ENCODE measurements at regions of chr5 and their contacts with region 1.

Region 1: GRCh38 chr5:72280581-72281170 is 39.4 kb downstream of the MRPS27 start:
- DNase-seq: peak in 1 of 3 donors; percentile 16
- ATAC-seq: no peak
- H3K4me3 ChIP-seq: no peak overlapping the region
- H3K4me1 ChIP-seq: no peaks in the 10 kb centered on the region
- CTCF ChIP-seq: no peak

Region 2: GRCh38 chr5:72138943-72139521 is 141.6 kb before region 1 on chr5:
- intact Hi-C with region 1: loop called in 1 of 2 experiments (anchors 10 kb)
- DNase-seq: no peak
- ATAC-seq: no peak
- H3K4me3 ChIP-seq: no peak overlapping the region
- H3K4me1 ChIP-seq: no peaks in the 10 kb centered on the region
- CTCF ChIP-seq: no peak